ENCODE measurements at regions of chr12 and their contacts with region 1.

Region 1: GRCh38 chr12:121986489-121987245 is 35.0 kb upstream of the BCL7A start:
- DNase-seq: no peak
- ATAC-seq: no peak
- H3K4me3 ChIP-seq: no peak overlapping the region
- H3K4me3 Mint-ChIP-seq: no peak overlapping the region
- H3K27ac ChIP-seq: no peak overlapping the region
- H3K27ac Mint-ChIP-seq: no peak overlapping the region
- H3K4me1 ChIP-seq: no peaks in the 10 kb centered on the region
- H3K4me1 Mint-ChIP-seq: peaks cover 0 to 9% (median 7%) of the 10 kb centered on the region in 3 donors
- H3K27me3 ChIP-seq: peaks cover 0 to 7% of the 10 kb centered on the region in 2 experiments
- H3K27me3 Mint-ChIP-seq: no peaks in the 10 kb centered on the region

Region 2: GRCh38 chr12:122306407-122306806 is 319.7 kb after region 1 on chr12:
- CTCF ChIA-PET with region 1: no interaction called
- POLR2A ChIA-PET with region 1: interaction called in 1 of 2 experiments, 12 read pairs
- DNase-seq: no peak
- ATAC-seq: no peak
- H3K4me3 ChIP-seq: no peak overlapping the region
- H3K4me3 Mint-ChIP-seq: no peak overlapping the region
- H3K27ac ChIP-seq: no peak overlapping the region
- H3K27ac Mint-ChIP-seq: no peak overlapping the region
- H3K4me1 ChIP-seq: no peaks in the 10 kb centered on the region
- H3K4me1 Mint-ChIP-seq: no peaks in the 10 kb centered on the region
- H3K27me3 ChIP-seq: no peaks in the 10 kb centered on the region
- H3K27me3 Mint-ChIP-seq: no peaks in the 10 kb centered on the region